CD8-positive, alpha-beta T cell (primary cell): ENCODE measurements at regions of chr3 and their contacts with region 1.

Region 1: DNA sequence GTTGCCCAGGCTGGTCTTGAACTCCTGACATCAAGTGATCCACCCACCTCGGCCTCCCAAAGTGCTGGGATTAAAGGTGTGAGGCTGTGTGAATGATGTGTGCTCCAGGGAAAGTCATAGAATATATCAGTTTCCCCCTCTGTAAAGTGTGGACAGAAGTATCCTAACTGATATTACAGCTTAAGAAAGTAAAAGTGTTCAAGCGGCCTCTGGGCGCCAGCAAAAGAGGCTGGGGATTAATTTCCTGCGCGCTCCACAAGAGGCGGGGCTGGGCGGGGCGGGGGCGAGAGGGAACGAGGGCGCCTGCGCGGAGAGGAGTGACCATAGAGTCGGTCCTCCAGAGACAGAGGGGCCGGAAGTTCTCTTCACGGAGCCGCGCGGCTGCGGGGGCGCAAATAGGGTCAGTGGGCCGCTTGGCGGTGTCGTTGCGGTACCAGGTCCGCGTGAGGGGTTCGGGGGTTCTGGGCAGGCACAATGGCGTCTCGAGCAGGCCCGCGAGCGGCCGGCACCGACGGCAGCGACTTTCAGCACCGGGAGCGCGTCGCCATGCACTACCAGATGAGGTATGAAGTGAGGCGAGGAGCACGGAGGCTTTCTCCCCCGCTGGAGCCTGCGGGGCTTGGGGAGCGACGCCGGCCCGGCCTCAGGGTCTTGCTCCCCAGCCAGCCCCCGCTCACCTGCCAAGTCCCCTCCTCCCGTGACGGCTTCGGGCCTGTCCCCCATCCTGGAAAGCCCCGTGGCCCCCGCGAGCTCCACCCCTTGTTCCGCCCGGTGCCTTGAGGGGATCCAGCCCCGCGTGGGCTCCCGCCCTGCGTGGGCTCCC is at the start of gene JAGN1:
- DNase-seq: peak; percentile 86 to 94 (median 91)
- ATAC-seq: peak; percentile 92
- H3K4me3 ChIP-seq: peak within 1 kb of the TSS; percentile 95 to 96
- H3K4me3 Mint-ChIP-seq: peak within 1 kb of the TSS; percentile 98
- H3K27ac ChIP-seq: peak within 1 kb of the TSS; percentile 99 to 100
- H3K27ac Mint-ChIP-seq: peak within 1 kb of the TSS; percentile 100
- H3K4me1 ChIP-seq: peaks cover 16% of the 10 kb centered on the region
- H3K4me1 Mint-ChIP-seq: peaks cover 40% of the 10 kb centered on the region
- H3K27me3 ChIP-seq: no peaks in the 10 kb centered on the region
- H3K27me3 Mint-ChIP-seq: no peaks in the 10 kb centered on the region
- CTCF ChIP-seq: no peak
- total RNA-seq, gene JAGN1: 13.4 to 14.5 TPM

Region 2: GRCh38 chr3:9749645-9750555 is 140.6 kb before region 1 on chr3 and contains the start of gene OGG1:
- CTCF ChIA-PET with region 1: no interaction called
- POLR2A ChIA-PET with region 1: no interaction called
- intact Hi-C with region 1: loop called (anchors 1 to 5 kb)
- DNase-seq: peak; percentile 84 to 98 (median 95)
- ATAC-seq: peak; percentile 93
- H3K4me3 ChIP-seq: peak within 1 kb of the TSS; percentile 79 to 94
- H3K4me3 Mint-ChIP-seq: peak within 1 kb of the TSS; percentile 96
- H3K27ac ChIP-seq: peak within 1 kb of the TSS; percentile 50 to 52
- H3K27ac Mint-ChIP-seq: peak within 1 kb of the TSS; percentile 93
- H3K4me1 ChIP-seq: peaks cover 35% of the 10 kb centered on the region
- H3K4me1 Mint-ChIP-seq: peaks cover 44% of the 10 kb centered on the region
- H3K27me3 ChIP-seq: no peaks in the 10 kb centered on the region
- H3K27me3 Mint-ChIP-seq: no peaks in the 10 kb centered on the region
- CTCF ChIP-seq: no peak
- total RNA-seq, gene OGG1: 4.9 to 7.9 TPM

Region 3: DNA sequence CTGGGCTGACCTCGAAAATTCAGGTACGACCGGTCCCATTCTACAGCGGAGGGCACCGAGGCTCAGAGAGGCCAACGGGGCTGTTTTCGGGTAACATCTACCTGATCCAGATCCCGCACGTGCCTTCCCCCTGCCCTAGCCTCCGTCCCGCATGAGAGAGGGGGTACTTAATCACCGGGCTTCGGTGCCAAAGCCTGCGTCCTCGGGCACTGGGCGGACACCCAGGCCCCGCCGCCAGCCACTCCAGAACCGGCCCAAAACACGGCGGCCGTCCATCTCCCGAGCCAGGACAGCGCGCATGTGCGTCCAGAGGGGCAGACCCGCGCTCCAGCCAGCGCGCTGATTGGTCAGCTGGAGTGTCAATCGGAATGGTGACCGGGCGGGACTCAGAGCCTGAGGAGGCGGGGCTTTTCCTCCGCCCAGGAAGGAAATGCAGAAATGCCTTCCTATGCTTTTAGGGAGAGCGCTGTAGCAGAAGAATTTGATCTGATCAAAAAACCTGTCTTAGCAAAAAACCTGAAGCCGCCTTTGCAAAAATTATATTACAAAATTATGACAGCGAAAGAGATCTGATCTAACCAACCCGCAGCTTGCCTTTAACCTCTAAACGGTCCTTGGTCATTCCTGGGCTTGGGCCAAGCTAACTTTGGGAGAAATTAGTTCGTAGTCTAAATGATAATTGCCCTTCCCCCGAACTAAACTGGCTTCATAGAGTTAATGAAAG is 46.6 kb before region 1 on chr3 and contains the start of gene RPUSD3:
- CTCF ChIA-PET with region 1: interaction called, 3 read pairs
- POLR2A ChIA-PET with region 1: interaction called, 7 read pairs
- intact Hi-C with region 1: loop called (anchors 1 kb)
- DNase-seq: peak; percentile 93 to 99 (median 96)
- ATAC-seq: peak; percentile 98
- H3K4me3 ChIP-seq: peak within 1 kb of the TSS; percentile 96 to 99
- H3K4me3 Mint-ChIP-seq: peak within 1 kb of the TSS; percentile 97
- H3K27ac ChIP-seq: peak within 1 kb of the TSS; percentile 64 to 82
- H3K27ac Mint-ChIP-seq: peak within 1 kb of the TSS; percentile 90
- H3K4me1 ChIP-seq: peaks cover 6% of the 10 kb centered on the region
- H3K4me1 Mint-ChIP-seq: peaks cover 26% of the 10 kb centered on the region
- H3K27me3 ChIP-seq: no peaks in the 10 kb centered on the region
- H3K27me3 Mint-ChIP-seq: no peaks in the 10 kb centered on the region
- CTCF ChIP-seq: no peak
- total RNA-seq, gene RPUSD3: 5.3 to 6.4 TPM

Region 4: DNA sequence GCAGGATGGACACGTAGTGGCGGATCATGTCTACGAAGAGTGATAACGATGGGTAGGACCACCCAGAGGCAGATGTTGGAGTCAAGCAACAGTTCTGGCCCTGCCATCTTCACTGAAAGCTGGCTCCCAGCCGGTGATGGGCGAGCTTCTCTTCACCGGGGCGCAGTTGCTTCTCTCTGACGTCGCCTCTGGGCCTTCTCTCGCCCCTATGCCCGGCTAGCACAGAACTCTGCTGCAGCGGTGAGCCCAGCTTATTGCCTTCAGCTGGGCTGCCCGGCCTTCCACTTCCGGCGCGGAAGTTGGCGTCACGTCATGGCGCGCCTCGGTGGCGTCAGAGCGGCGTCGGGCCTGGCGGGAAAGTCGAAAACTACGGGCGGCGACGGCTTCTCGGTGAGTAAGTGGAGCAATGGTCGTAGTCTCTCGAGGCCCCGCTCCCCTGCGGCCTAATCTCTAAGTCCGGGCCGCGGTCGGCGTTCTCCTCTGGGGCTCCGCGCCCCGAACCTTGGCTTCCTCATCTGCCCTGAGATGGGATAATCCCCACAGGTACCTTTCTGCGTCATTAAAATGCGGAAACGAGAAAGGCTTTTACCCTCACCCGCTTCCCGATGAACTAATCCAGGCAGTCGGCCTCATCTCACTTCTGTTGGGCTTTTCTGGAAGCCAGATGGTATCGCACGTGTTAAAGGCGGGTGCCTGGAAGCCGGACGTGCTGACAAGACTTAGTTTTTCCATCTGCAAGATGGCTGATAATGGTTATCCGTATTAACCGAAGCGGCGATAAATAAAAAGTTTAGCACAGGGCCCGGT is 135.8 kb after region 1 on chr3 and contains the start of gene FANCD2:
- CTCF ChIA-PET with region 1: no interaction called
- POLR2A ChIA-PET with region 1: no interaction called
- intact Hi-C with region 1: loop called (anchors 1 to 2 kb)
- DNase-seq: peak; percentile 87 to 97 (median 93)
- ATAC-seq: peak; percentile 92
- H3K4me3 ChIP-seq: peak within 1 kb of the TSS; percentile 76 to 82
- H3K4me3 Mint-ChIP-seq: peak within 1 kb of the TSS; percentile 98
- H3K27ac ChIP-seq: peak within 1 kb of the TSS; percentile 84
- H3K27ac Mint-ChIP-seq: peak within 1 kb of the TSS; percentile 96
- H3K4me1 ChIP-seq: peaks cover 18% of the 10 kb centered on the region
- H3K4me1 Mint-ChIP-seq: peaks cover 27% of the 10 kb centered on the region
- H3K27me3 ChIP-seq: no peaks in the 10 kb centered on the region
- H3K27me3 Mint-ChIP-seq: no peaks in the 10 kb centered on the region
- CTCF ChIP-seq: no peak
- total RNA-seq, gene FANCD2: 15.8 to 17.7 TPM